ENCODE measurements at regions of chr3 and their contacts with region 1.

Region 1: GRCh38 chr3:66822186-66823008 is 175.7 kb upstream of the KBTBD8 start:
- DNase-seq: peak; percentile 56 to 87
- H3K4me3 ChIP-seq: no peak overlapping the region
- H3K4me1 ChIP-seq: peaks cover 31% of the 10 kb centered on the region
- H3K27me3 ChIP-seq: no peaks in the 10 kb centered on the region

Region 2: DNA sequence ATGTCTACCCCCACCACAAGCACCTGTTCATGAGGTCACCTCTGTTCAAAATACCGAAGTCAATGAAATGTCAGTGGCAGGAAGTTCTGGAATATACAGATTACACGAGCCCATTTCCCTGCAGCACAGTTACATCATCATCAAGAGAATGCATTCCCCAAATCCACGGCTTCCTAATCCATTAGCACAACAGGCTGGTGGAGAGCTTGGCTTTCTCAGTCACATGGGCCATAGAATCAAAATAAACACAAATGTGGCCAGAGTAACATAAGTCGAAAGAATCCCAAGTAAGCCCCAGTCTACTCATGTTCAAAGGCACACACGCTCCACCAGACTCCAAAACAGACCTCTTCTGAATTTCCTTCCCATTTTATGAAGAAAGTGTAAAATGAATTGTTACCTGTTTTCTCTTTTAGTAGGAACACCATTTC is 1202.9 kb before region 1 on chr3:
- in situ Hi-C with region 1: no loop called
- DNase-seq: no peak
- H3K4me3 ChIP-seq: no peak overlapping the region
- H3K4me1 ChIP-seq: no peaks in the 10 kb centered on the region
- H3K27me3 ChIP-seq: no peaks in the 10 kb centered on the region

Region 3: DNA sequence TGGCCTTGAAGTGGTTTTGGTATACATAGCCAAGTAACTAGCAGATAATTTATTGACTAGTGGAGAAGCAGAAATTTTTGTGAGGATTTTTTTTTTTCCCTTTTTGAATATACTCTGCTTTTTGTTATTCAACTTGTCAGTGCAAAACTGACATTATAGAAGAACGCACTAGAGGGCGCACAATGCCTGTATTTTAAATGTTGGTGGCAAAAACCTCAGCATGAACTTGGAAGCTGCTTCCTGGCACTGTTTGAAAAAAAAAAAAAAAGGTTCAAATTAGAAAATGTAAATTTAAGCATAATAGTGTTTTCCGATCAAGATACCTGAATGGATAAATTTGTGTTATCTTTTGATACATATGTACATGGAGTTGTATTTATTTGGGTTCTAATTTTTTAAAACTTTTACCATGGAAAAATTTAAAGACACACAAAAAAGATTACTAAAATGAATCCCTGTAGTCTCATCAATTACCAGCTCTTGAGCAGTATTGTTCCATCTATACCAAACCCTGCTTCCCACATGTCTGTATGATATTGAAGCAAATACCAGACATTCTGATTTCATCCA is 545.6 kb before region 1 on chr3:
- in situ Hi-C with region 1: loop called (anchors 10 kb)
- DNase-seq: peak; percentile 52 to 75
- H3K4me3 ChIP-seq: no peak overlapping the region
- H3K4me1 ChIP-seq: peaks cover 11% of the 10 kb centered on the region
- H3K27me3 ChIP-seq: no peaks in the 10 kb centered on the region

Region 4: DNA sequence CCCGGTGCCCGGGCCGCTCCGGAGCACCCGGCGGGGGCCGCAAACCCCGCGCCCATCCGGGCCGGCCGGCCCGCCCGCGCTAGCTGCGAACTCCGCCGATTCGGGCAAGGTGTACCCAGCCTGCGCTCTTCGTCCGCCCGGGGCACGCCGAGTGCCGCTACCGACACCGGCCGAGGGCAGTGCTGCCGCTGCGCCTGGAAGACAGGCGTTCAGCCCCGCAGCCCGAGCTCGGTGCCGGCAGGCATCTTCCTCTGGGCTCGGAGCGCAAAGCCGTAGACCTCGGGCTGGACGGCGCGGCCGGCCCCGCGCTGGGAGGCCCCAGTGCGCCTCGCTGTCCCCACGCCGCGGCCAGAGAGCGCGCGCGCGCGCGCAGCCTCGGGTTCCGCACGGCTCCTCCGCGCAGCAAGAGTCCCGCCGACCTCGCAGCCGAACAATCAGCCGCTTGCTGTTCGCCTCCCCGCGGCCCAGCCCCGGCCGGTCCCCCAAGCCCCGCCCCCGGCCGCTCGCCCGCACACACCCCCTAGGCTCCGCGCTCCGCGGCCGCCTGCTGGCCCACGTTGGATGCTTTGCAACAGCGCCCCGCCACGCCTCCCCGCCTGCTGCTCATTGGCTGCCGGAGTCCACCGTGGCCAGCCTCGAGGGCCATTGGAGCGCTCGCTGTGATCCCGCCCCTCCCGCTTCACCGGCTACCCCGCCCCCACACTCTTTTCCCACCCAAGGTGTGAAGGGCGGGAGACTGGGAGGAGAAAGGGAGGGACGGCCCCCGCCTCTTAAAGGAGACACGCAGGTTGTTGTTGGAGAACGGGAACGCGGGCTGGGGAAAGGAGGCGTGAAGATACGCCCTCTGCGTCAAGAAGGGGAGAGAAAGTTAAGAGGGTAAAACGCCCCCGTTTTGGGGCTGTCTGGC is 321.6 kb before region 1 on chr3 and contains the start of gene LRIG1:
- in situ Hi-C with region 1: loop called (anchors 25 kb)
- DNase-seq: peak; percentile 97 to 100
- H3K4me3 ChIP-seq: peak within 1 kb of the TSS; percentile 59
- H3K4me1 ChIP-seq: peaks cover 45% of the 10 kb centered on the region
- H3K27me3 ChIP-seq: peaks cover 5% of the 10 kb centered on the region; the same call in 1 of the 2 replicates

Region 5: DNA sequence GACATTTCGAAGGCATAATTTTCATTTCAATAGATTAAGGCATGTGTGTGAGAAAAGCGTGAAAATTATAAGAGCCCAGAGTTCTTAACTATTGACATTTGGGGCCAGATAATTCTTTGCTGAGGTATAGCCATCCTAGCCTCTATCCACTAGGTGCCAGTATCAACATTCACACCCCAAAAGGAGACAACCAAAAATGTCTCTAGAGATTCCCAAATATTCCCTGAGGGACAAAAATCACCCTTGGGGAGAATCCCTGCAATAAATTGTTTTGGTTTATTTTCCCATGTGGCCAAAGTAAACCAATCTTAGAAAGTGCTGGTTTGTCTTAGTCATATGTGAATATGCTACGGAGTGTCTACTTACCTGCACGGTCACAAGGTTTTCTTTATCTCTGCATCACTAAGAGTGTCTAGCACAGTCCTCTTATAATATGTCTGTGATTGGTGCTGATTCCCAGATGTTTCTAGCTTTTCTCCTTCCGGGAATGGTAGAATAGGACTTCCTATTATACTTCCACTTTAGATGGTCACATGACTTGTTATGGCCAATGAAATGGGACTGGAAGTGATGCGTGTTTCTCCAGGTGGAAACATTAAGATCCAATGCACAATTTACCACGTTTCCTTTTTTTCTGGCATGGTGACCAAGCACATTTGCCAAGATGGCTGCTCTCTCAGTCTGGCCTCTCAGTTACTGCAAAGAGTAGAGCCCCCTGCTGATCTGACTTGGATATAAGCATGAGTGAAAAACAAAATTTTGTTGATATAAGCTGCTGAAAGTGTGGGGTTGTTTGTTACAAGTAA is 167.7 kb after region 1 on chr3:
- in situ Hi-C with region 1: no loop called
- DNase-seq: peak in 1 of 2 experiments; percentile 18
- H3K4me3 ChIP-seq: no peak overlapping the region
- H3K4me1 ChIP-seq: peaks cover 15% of the 10 kb centered on the region
- H3K27me3 ChIP-seq: no peaks in the 10 kb centered on the region

Measured in HAP-1 (cell line).